ENCODE measurements at regions of chr4 and their contacts with region 1.

Region 1: GRCh38 chr4:47463235-47463956 is at the start of gene COMMD8:
- DNase-seq: peak; percentile 96 to 98 (median 97)
- H3K4me3 ChIP-seq: peak within 1 kb of the TSS; percentile 64 to 98 (median 88)
- H3K27ac ChIP-seq: peak within 1 kb of the TSS; percentile 72 to 98 (median 91)
- H3K27me3 ChIP-seq: no peaks in the 10 kb centered on the region
- CTCF ChIP-seq: peak in 53 of 56 donors; percentile 14 to 78 (median 55)
- total RNA-seq, gene COMMD8: 6.1 to 16.9 (median 10.0) TPM

Region 2: GRCh38 chr4:47485047-47485692 is 21.8 kb after region 1 on chr4 and contains the start of gene ATP10D:
- intact Hi-C with region 1: loop called (anchors 1 kb)
- DNase-seq: peak; percentile 91 to 98 (median 94)
- H3K4me3 ChIP-seq: peak within 1 kb of the TSS; percentile 52 to 88 (median 74)
- H3K27ac ChIP-seq: peak within 1 kb of the TSS; percentile 66 to 97 (median 93)
- H3K27me3 ChIP-seq: no peaks in the 10 kb centered on the region
- CTCF ChIP-seq: peak in 46 of 56 donors; percentile 3 to 55 (median 35)
- total RNA-seq, gene ATP10D: 12.2 to 33.2 (median 19.8) TPM

Region 3: DNA sequence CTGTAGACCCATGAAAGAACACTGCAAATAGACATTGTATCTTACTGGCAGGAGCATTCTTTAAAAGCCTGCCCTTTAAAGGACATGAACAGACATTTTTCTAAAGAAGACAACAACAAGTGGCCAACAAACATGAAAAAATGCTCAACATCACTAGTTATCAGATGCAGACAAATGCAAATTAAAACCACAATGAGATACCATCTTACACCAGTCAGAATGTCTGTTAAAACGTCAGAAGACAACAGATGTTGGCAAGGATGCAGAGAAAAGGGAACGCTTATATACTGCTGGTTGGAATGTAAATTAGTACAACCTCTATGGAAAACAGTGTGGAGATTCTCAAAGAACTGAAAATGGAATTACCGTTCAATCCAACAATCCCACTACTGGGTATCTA is 98.9 kb after region 1 on chr4:
- intact Hi-C with region 1: loop called in 1 of 2 experiments (anchors 5 kb)
- DNase-seq: no peak
- H3K4me3 ChIP-seq: no peak overlapping the region
- H3K27ac ChIP-seq: no peak overlapping the region
- H3K27me3 ChIP-seq: no peaks in the 10 kb centered on the region
- CTCF ChIP-seq: no peak

Region 4: GRCh38 chr4:47914220-47914925 is 451.0 kb after region 1 on chr4 and contains the start of gene NFXL1:
- intact Hi-C with region 1: loop called in 1 of 2 experiments (anchors 5 kb)
- DNase-seq: peak; percentile 95 to 98 (median 97)
- H3K4me3 ChIP-seq: peak within 1 kb of the TSS; percentile 65 to 99 (median 92)
- H3K27ac ChIP-seq: peak within 1 kb of the TSS in 53 of 59 donors; percentile 5 to 92 (median 72)
- H3K27me3 ChIP-seq: no peaks in the 10 kb centered on the region
- CTCF ChIP-seq: peak in 18 of 56 donors; percentile 5 to 43 (median 20)
- total RNA-seq, gene NFXL1: 15.0 to 36.5 (median 22.0) TPM

Measured in dorsolateral prefrontal cortex (tissue), 120 donors.